BJ (cell line): ENCODE measurements at regions of chr17 and their contacts with region 1.

Region 1: GRCh38 chr17:67800495-67800928 is 24.8 kb upstream of the BPTF start:
- DNase-seq: peak; percentile 9
- H3K4me3 ChIP-seq: no peak overlapping the region
- H3K27me3 ChIP-seq: no peaks in the 10 kb centered on the region
- CTCF ChIP-seq: peak; percentile 78

Region 2: DNA sequence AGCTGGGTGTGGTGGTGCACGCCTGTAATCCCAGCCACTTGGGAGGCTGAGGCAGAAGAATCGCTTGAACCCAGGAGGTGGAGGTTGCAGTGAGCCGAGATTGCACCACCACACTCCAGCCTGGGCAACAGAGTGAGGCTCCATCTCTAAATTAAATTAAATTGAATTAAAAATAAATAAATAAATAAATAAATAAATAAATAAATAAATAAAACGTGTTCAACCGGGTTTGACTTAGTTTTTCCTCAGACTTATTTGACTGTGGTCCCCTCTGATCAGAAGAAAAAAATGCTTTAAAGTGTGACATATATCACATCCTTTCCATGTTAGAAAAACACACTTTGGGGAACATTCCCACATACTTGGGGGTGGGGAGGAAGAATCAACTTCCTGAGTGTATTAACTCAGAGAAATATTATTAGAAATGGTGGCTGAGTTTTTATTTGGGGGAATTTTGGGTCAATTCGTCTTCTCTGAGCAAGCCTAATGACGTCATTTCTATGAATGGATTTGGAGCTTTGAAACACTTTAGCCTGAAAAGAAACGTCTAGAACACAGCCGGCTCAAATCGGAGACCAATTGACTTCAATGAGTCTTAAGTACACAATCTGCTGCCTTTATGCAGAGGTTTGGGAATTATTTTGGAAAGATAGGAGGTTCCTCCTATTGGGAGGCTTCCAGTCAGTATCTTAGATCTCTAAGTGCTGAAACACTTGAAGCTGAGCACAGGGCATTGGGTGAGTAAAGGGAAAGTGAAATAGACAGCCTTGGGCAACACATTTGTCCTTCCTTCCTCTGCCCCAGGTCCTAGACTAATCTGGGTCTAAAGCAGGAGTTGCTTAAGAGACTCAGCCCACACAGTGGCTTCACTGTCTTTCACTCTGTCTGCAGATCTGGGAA is 290.9 kb before region 1 on chr17:
- CTCF ChIA-PET with region 1: no interaction called
- POLR2A ChIA-PET with region 1: no interaction called
- DNase-seq: no peak
- H3K4me3 ChIP-seq: no peak overlapping the region
- H3K27me3 ChIP-seq: no peaks in the 10 kb centered on the region
- CTCF ChIP-seq: no peak

Region 3: GRCh38 chr17:67733371-67733940 is 67.1 kb before region 1 on chr17:
- CTCF ChIA-PET with region 1: no interaction called
- POLR2A ChIA-PET with region 1: no interaction called
- DNase-seq: no peak
- H3K4me3 ChIP-seq: no peak overlapping the region
- H3K27me3 ChIP-seq: no peaks in the 10 kb centered on the region
- CTCF ChIP-seq: no peak

Region 4: DNA sequence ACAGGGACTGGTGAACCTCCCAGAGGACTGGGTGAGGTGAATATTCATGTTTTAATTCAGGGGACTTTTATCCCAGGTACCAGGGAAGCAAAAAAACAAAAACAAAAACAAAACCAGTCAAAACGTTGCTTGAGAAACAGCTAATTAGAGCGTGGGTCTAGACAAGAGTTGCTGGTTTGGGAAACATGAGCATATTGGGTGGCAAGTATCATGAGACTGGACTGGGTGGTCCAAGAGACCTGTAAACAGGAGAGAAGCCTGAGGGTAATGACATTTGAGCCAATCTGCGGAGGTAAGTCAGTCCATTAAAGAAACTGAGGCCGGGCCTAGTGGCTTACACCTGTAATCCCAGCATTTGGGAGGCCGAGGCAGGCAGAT is 13.3 kb after region 1 on chr17:
- CTCF ChIA-PET with region 1: interaction called, 14 read pairs
- POLR2A ChIA-PET with region 1: interaction called, 7 read pairs
- DNase-seq: no peak
- H3K4me3 ChIP-seq: no peak overlapping the region
- H3K27me3 ChIP-seq: peaks cover 3% of the 10 kb centered on the region; the same call in 1 of the 2 replicates
- CTCF ChIP-seq: no peak

Region 5: GRCh38 chr17:67836205-67836987 is 35.9 kb after region 1 on chr17:
- CTCF ChIA-PET with region 1: no interaction called
- POLR2A ChIA-PET with region 1: no interaction called
- DNase-seq: peak; percentile 15
- H3K4me3 ChIP-seq: no peak overlapping the region
- H3K27me3 ChIP-seq: no peaks in the 10 kb centered on the region
- CTCF ChIP-seq: no peak

Region 6: GRCh38 chr17:67891581-67892054 is 91.1 kb after region 1 on chr17:
- CTCF ChIA-PET with region 1: interaction called, 13 read pairs
- POLR2A ChIA-PET with region 1: no interaction called
- DNase-seq: peak; percentile 47
- H3K4me3 ChIP-seq: no peak overlapping the region
- H3K27me3 ChIP-seq: no peaks in the 10 kb centered on the region
- CTCF ChIP-seq: peak; percentile 47

Region 7: DNA sequence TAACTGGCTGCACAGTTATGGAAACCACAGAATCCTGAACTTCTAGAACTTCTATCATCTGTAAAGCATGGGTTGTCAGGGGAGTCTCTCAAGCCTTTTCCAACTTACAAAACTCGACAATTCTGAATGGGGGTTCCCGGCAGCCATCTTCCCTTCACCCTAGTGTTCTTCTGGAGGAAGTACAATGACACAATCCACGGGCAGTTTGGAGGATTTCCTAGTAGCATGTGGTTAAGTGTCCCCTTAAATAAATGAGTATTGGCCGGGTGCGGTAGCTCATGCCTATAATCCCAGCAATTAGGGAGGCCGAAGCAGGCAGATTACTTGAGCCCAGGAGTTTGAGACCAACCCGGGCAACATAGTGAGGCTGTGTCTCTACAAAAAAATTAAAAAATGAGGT is 488.3 kb after region 1 on chr17:
- CTCF ChIA-PET with region 1: no interaction called
- POLR2A ChIA-PET with region 1: interaction called, 10 read pairs
- DNase-seq: no peak
- H3K4me3 ChIP-seq: no peak overlapping the region
- H3K27me3 ChIP-seq: peaks cover 7% of the 10 kb centered on the region
- CTCF ChIP-seq: no peak